Endothelial cell of umbilical vein (primary cell): ENCODE measurements at regions of chr11 and their contacts with region 1.

Region 1: DNA sequence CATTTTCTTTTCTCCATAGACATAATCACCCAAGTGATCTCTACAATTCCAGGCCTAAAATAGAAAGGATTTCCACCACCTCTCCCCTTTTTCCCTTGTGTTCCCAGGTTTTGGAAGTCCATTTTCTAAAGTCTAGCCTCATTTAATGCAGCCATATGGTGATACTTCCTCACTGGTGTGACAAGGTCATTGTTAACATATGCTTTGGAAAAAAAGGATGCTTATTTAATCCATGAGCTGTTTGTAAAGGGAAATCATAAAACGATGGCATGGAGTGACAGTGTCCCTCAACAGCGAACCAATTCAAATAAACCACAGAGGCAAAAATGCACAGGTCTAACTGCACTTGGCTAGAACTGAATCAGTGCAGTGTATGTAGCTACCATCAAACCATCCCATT is 26.6 kb downstream of the GRIA4 start:
- DNase-seq: no peak
- H3K4me3 ChIP-seq: no peak overlapping the region
- H3K27ac ChIP-seq: no peak overlapping the region
- H3K4me1 ChIP-seq: no peaks in the 10 kb centered on the region
- H3K27me3 ChIP-seq: no peaks in the 10 kb centered on the region
- CTCF ChIP-seq: no peak
- POLR2A ChIP-seq: no peak

Region 2: GRCh38 chr11:105429096-105429910 is 207.2 kb before region 1 on chr11:
- CTCF ChIA-PET with region 1: no interaction called
- POLR2A ChIA-PET with region 1: no interaction called
- dilution Hi-C with region 1: no loop called
- intact Hi-C with region 1: no loop called
- DNase-seq: no peak
- H3K4me3 ChIP-seq: no peak overlapping the region
- H3K27ac ChIP-seq: no peak overlapping the region
- H3K4me1 ChIP-seq: no peaks in the 10 kb centered on the region
- H3K27me3 ChIP-seq: no peaks in the 10 kb centered on the region
- CTCF ChIP-seq: no peak
- POLR2A ChIP-seq: no peak

Region 3: GRCh38 chr11:105609832-105610781 is 26.4 kb before region 1 on chr11 and contains the start of gene GRIA4:
- CTCF ChIA-PET with region 1: no interaction called
- POLR2A ChIA-PET with region 1: no interaction called
- dilution Hi-C with region 1: no loop called
- intact Hi-C with region 1: loop called (anchors 2 kb)
- DNase-seq: peak; percentile 29
- H3K4me3 ChIP-seq: peak within 1 kb of the TSS; percentile 32 to 66 (median 41)
- H3K27ac ChIP-seq: no peak within 1 kb of the TSS
- H3K4me1 ChIP-seq: peaks cover 17% of the 10 kb centered on the region
- H3K27me3 ChIP-seq: peaks cover 28 to 30% of the 10 kb centered on the region in 2 experiments
- CTCF ChIP-seq: no peak
- POLR2A ChIP-seq: no peak
- total RNA-seq, gene GRIA4: not detected in 2 replicates

Region 4: DNA sequence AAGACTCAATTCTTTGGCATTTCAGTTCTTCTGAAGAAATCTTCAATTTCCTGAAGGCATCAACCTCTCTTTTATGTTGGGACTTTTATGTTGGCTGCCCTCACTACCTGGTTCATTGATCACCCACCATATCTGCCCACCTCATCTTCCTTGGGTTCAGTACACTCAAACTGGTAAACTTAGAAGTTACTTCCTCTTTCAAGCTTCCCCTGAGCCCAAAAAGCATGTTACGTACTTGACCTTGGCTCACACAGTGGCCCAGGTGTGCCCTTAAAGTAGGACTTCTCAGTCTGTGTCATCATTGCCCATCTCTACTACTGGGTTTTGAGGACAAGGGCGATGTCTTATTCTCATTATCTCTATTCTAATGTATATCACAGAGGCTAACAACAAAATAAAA is 59.5 kb after region 1 on chr11:
- CTCF ChIA-PET with region 1: no interaction called
- POLR2A ChIA-PET with region 1: no interaction called
- dilution Hi-C with region 1: no loop called
- intact Hi-C with region 1: no loop called
- DNase-seq: no peak
- H3K4me3 ChIP-seq: no peak overlapping the region
- H3K27ac ChIP-seq: no peak overlapping the region
- H3K4me1 ChIP-seq: no peaks in the 10 kb centered on the region
- H3K27me3 ChIP-seq: no peaks in the 10 kb centered on the region
- CTCF ChIP-seq: no peak
- POLR2A ChIP-seq: no peak